GM12878 (cell line): ENCODE measurements at regions of chr10 and their contacts with region 1.

Region 1: GRCh38 chr10:30359373-30360206 is 10.5 kb upstream of the MTPAP start:
- DNase-seq: peak; percentile 39
- ATAC-seq: peak; percentile 97
- H3K4me3 ChIP-seq: no peak overlapping the region
- H3K27ac ChIP-seq: no peak overlapping the region
- H3K4me1 ChIP-seq: peaks cover 4% of the 10 kb centered on the region
- H3K27me3 ChIP-seq: no peaks in the 10 kb centered on the region
- CTCF ChIP-seq: peak; percentile 72 to 98 (median 95)
- EP300 ChIP-seq: no peak
- POLR2A ChIP-seq: no peak
- RAD21 ChIP-seq: peak; percentile 53

Region 2: GRCh38 chr10:30247704-30248103 is 111.9 kb before region 1 on chr10:
- CTCF ChIA-PET with region 1: no interaction called
- POLR2A ChIA-PET with region 1: no interaction called
- RAD21 ChIA-PET with region 1: no interaction called
- SMC1A ChIA-PET with region 1: no interaction called
- in situ Hi-C with region 1: no loop called
- intact Hi-C with region 1: no loop called
- DNase-seq: no peak
- ATAC-seq: peak; percentile 75
- H3K4me3 ChIP-seq: no peak overlapping the region
- H3K27ac ChIP-seq: no peak overlapping the region
- H3K4me1 ChIP-seq: no peaks in the 10 kb centered on the region
- H3K27me3 ChIP-seq: no peaks in the 10 kb centered on the region
- CTCF ChIP-seq: no peak
- EP300 ChIP-seq: no peak
- POLR2A ChIP-seq: no peak
- RAD21 ChIP-seq: no peak

Region 3: DNA sequence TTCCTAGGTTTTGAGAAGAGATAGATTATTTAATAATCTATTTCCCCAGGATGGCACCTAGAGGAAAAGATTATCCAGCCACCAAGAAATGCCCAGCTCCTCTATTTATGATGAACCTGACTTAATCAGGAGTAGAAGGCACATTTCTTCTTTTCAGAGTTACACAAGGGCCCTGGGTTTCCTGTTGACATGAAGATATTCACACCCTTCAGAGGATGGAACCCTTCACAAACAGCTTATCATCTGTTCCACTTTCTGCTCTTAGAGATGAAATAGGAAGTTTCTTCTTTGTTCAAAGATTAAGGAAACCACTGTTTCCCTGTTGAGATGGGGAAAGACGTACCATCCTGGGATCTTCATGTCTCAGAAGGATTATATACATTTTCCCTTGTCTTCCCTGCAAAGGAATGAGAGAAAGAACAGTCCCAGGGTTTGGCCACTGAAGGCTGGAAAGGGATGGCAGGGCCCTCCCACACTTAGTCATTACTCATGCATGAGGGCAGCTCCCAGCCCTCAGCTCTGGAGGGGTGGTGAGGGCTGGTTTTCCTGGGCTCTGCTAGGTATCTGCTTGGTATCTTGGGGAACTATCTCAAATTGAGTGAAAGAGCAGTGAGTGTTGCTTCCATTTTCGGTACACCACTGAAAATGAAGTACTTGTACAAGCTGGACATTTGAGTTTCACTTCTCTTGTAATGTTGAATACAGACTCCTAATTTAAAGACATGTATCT is 74.6 kb before region 1 on chr10:
- CTCF ChIA-PET with region 1: interaction called, 10 read pairs
- POLR2A ChIA-PET with region 1: no interaction called
- RAD21 ChIA-PET with region 1: no interaction called
- SMC1A ChIA-PET with region 1: no interaction called
- in situ Hi-C with region 1: no loop called
- intact Hi-C with region 1: no loop called
- DNase-seq: peak; percentile 42
- ATAC-seq: peak; percentile 93
- H3K4me3 ChIP-seq: peak overlapping the region; percentile 34; the same call in 1 of the 2 replicates
- H3K27ac ChIP-seq: peak overlapping the region; percentile 45
- H3K4me1 ChIP-seq: peaks cover 19% of the 10 kb centered on the region
- H3K27me3 ChIP-seq: no peaks in the 10 kb centered on the region
- CTCF ChIP-seq: no peak
- EP300 ChIP-seq: no peak
- POLR2A ChIP-seq: no peak
- RAD21 ChIP-seq: no peak

Region 4: GRCh38 chr10:30324448-30325110 is 35.0 kb before region 1 on chr10:
- CTCF ChIA-PET with region 1: interaction called, 11 read pairs
- POLR2A ChIA-PET with region 1: no interaction called
- RAD21 ChIA-PET with region 1: no interaction called
- SMC1A ChIA-PET with region 1: no interaction called
- in situ Hi-C with region 1: no loop called
- intact Hi-C with region 1: no loop called
- DNase-seq: no peak
- ATAC-seq: no peak
- H3K4me3 ChIP-seq: no peak overlapping the region
- H3K27ac ChIP-seq: no peak overlapping the region
- H3K4me1 ChIP-seq: no peaks in the 10 kb centered on the region
- H3K27me3 ChIP-seq: no peaks in the 10 kb centered on the region
- CTCF ChIP-seq: no peak
- EP300 ChIP-seq: no peak
- POLR2A ChIP-seq: no peak
- RAD21 ChIP-seq: no peak

Region 5: GRCh38 chr10:30348378-30348776 is 11.2 kb before region 1 on chr10:
- CTCF ChIA-PET with region 1: interaction called, 65 read pairs
- POLR2A ChIA-PET with region 1: no interaction called
- RAD21 ChIA-PET with region 1: interaction called, 9 read pairs
- SMC1A ChIA-PET with region 1: interaction called, 12 read pairs
- in situ Hi-C with region 1: no loop called
- intact Hi-C with region 1: no loop called
- DNase-seq: peak; percentile 2
- ATAC-seq: peak; percentile 20
- H3K4me3 ChIP-seq: peak overlapping the region; percentile 89
- H3K27ac ChIP-seq: peak overlapping the region; percentile 92
- H3K4me1 ChIP-seq: peaks cover 3% of the 10 kb centered on the region; the same call in 1 of the 2 replicates
- H3K27me3 ChIP-seq: no peaks in the 10 kb centered on the region; a peak in 1 of 4 replicates
- CTCF ChIP-seq: no peak
- EP300 ChIP-seq: no peak
- POLR2A ChIP-seq: no peak
- RAD21 ChIP-seq: no peak

Region 6: DNA sequence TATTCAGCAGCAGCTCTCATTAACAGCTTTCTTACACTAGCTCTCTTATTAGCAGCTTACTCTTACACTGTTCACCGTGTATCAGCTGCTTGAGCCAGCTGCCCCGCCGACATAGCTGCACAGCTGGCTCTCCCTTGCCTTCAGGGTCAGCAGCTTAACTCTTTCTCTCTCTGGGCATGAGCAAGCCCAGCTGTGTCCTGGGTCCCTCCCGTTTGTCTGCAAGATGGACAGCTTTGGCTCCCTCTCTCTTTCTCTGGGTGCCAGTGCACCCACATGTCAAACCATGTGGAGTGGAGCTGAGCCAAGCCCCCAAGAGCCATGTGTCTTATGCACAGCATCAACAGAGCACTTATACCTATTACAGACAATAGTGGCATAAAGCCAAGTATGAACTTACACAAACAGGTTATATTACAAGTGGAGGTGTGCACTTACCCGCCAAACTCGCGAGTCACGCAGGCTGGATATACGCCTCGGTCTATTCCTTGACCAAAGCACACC is 25.2 kb after region 1 on chr10:
- CTCF ChIA-PET with region 1: interaction called, 24 read pairs
- POLR2A ChIA-PET with region 1: no interaction called
- RAD21 ChIA-PET with region 1: interaction called, 7 read pairs
- SMC1A ChIA-PET with region 1: interaction called, 4 read pairs
- in situ Hi-C with region 1: no loop called
- intact Hi-C with region 1: no loop called
- DNase-seq: no peak
- ATAC-seq: peak; percentile 89
- H3K4me3 ChIP-seq: no peak overlapping the region
- H3K27ac ChIP-seq: no peak overlapping the region
- H3K4me1 ChIP-seq: no peaks in the 10 kb centered on the region
- H3K27me3 ChIP-seq: no peaks in the 10 kb centered on the region; a peak in 2 of 4 replicates
- CTCF ChIP-seq: peak; percentile 43 to 54 (median 48); a peak in 5 of 6 replicates
- EP300 ChIP-seq: no peak
- POLR2A ChIP-seq: no peak
- RAD21 ChIP-seq: no peak; the same call in 1 of the 2 replicates

Region 7: GRCh38 chr10:30392564-30392990 is 33.0 kb after region 1 on chr10:
- CTCF ChIA-PET with region 1: interaction called, 14 read pairs
- POLR2A ChIA-PET with region 1: no interaction called
- RAD21 ChIA-PET with region 1: no interaction called
- SMC1A ChIA-PET with region 1: interaction called, 4 read pairs
- in situ Hi-C with region 1: no loop called
- intact Hi-C with region 1: no loop called
- DNase-seq: peak; percentile 31
- ATAC-seq: peak; percentile 100
- H3K4me3 ChIP-seq: no peak overlapping the region
- H3K27ac ChIP-seq: no peak overlapping the region
- H3K4me1 ChIP-seq: no peaks in the 10 kb centered on the region
- H3K27me3 ChIP-seq: no peaks in the 10 kb centered on the region
- CTCF ChIP-seq: peak; percentile 81 to 100 (median 97); a peak in 5 of 6 replicates
- EP300 ChIP-seq: no peak
- POLR2A ChIP-seq: no peak
- RAD21 ChIP-seq: peak; percentile 97

Region 8: DNA sequence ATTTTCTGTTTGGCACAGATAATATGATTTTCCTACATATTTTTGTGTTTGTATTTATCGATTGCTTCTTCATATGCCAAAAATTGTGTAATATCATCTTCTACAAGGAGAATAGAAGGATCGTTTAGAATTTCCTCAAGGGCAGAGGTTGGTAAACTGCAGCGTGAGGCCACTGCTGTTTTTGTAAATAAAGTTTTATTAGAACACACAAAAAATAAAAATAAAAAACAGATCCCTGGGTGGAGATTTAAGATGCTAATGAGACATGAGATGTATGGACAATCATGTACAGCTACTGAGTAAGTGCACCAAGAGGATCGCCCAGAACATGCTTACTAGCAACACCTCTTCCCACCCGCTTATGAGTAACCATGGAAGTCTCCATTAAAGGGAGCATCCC is 260.4 kb after region 1 on chr10:
- CTCF ChIA-PET with region 1: no interaction called
- POLR2A ChIA-PET with region 1: no interaction called
- RAD21 ChIA-PET with region 1: no interaction called
- SMC1A ChIA-PET with region 1: no interaction called
- in situ Hi-C with region 1: no loop called
- intact Hi-C with region 1: no loop called
- DNase-seq: no peak
- ATAC-seq: no peak
- H3K4me3 ChIP-seq: no peak overlapping the region
- H3K27ac ChIP-seq: no peak overlapping the region
- H3K4me1 ChIP-seq: no peaks in the 10 kb centered on the region
- H3K27me3 ChIP-seq: no peaks in the 10 kb centered on the region; a peak in 3 of 4 replicates
- CTCF ChIP-seq: no peak
- EP300 ChIP-seq: no peak
- POLR2A ChIP-seq: no peak
- RAD21 ChIP-seq: no peak